Mammary epithelial cell (primary cell): ENCODE measurements at regions of chr2 and their contacts with region 1.

Region 1: GRCh38 chr2:152445791-152446201 is 110.8 kb downstream of the FMNL2 start:
- DNase-seq: peak; percentile 97
- H3K4me3 ChIP-seq: no peak overlapping the region
- H3K27ac ChIP-seq: peak overlapping the region; percentile 58
- H3K4me1 ChIP-seq: peaks cover 42% of the 10 kb centered on the region
- H3K27me3 ChIP-seq: no peaks in the 10 kb centered on the region
- CTCF ChIP-seq: no peak

Region 2: GRCh38 chr2:152263911-152264310 is 181.9 kb before region 1 on chr2:
- CTCF ChIA-PET with region 1: no interaction called
- dilution Hi-C with region 1: no loop called
- in situ Hi-C with region 1: no loop called
- intact Hi-C with region 1: no loop called
- DNase-seq: no peak
- H3K4me3 ChIP-seq: no peak overlapping the region
- H3K27ac ChIP-seq: no peak overlapping the region
- H3K4me1 ChIP-seq: no peaks in the 10 kb centered on the region
- H3K27me3 ChIP-seq: no peaks in the 10 kb centered on the region
- CTCF ChIP-seq: no peak

Region 3: GRCh38 chr2:152407204-152407721 is 38.5 kb before region 1 on chr2:
- CTCF ChIA-PET with region 1: no interaction called
- dilution Hi-C with region 1: no loop called
- in situ Hi-C with region 1: no loop called
- intact Hi-C with region 1: loop called (anchors 5 kb)
- DNase-seq: peak; percentile 66
- H3K4me3 ChIP-seq: no peak overlapping the region
- H3K27ac ChIP-seq: no peak overlapping the region
- H3K4me1 ChIP-seq: peaks cover 35% of the 10 kb centered on the region
- H3K27me3 ChIP-seq: no peaks in the 10 kb centered on the region
- CTCF ChIP-seq: no peak

Region 4: GRCh38 chr2:152505495-152505906 is 59.7 kb after region 1 on chr2:
- CTCF ChIA-PET with region 1: no interaction called
- dilution Hi-C with region 1: no loop called
- in situ Hi-C with region 1: no loop called
- intact Hi-C with region 1: loop called (anchors 5 kb)
- DNase-seq: peak; percentile 52
- H3K4me3 ChIP-seq: no peak overlapping the region
- H3K27ac ChIP-seq: peak overlapping the region; percentile 74
- H3K4me1 ChIP-seq: peaks cover 44% of the 10 kb centered on the region
- H3K27me3 ChIP-seq: no peaks in the 10 kb centered on the region
- CTCF ChIP-seq: no peak

Region 5: GRCh38 chr2:152627351-152627957 is 181.7 kb after region 1 on chr2:
- CTCF ChIA-PET with region 1: no interaction called
- dilution Hi-C with region 1: no loop called
- in situ Hi-C with region 1: no loop called
- intact Hi-C with region 1: loop called (anchors 10 kb)
- DNase-seq: peak; percentile 12
- H3K4me3 ChIP-seq: no peak overlapping the region
- H3K27ac ChIP-seq: no peak overlapping the region
- H3K4me1 ChIP-seq: no peaks in the 10 kb centered on the region
- H3K27me3 ChIP-seq: no peaks in the 10 kb centered on the region
- CTCF ChIP-seq: peak; percentile 44 to 53